Activated CD4-positive, alpha-beta memory T cell treated with anti-CD3 and anti-CD28 coated beads, Interleukin-2, amount 10 ng/mL, durations not matched to agents 7 days and 5 days (primary cell): ENCODE measurements at regions of chr17 and their contacts with region 1.

Region 1: GRCh38 chr17:43673516-43674323 is 12.0 kb upstream of the MEOX1 start:
- DNase-seq: peak; percentile 79
- H3K4me3 Mint-ChIP-seq: no peak overlapping the region
- H3K27ac Mint-ChIP-seq: no peak overlapping the region
- H3K4me1 Mint-ChIP-seq: peaks cover 34% of the 10 kb centered on the region
- H3K27me3 Mint-ChIP-seq: peaks cover 2% of the 10 kb centered on the region

Region 2: GRCh38 chr17:43641416-43641815 is 32.3 kb before region 1 on chr17:
- CTCF ChIA-PET with region 1: interaction called, 11 read pairs
- POLR2A ChIA-PET with region 1: no interaction called
- DNase-seq: no peak
- H3K4me3 Mint-ChIP-seq: no peak overlapping the region
- H3K27ac Mint-ChIP-seq: no peak overlapping the region
- H3K4me1 Mint-ChIP-seq: peaks cover 10% of the 10 kb centered on the region
- H3K27me3 Mint-ChIP-seq: peaks cover 21% of the 10 kb centered on the region

Region 3: DNA sequence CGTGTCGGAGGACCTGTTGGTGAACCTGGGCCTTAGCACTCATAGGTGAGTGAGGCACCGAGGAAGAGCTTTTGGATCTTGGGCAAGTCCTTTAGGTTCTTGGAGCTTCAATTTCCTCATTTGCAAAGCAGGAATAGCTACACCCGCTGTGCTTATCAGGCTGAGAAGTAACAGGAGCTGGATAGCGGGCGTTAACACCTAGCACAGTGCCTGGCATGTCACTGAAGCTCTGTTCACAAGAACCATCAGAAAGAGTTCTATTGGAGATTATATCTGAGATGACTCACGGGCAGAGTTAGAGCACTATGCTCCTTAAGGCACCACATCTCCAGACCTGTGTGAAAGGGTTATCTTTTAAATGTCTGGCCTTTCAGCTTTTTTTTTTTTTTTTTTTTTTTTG is 24.8 kb before region 1 on chr17:
- CTCF ChIA-PET with region 1: interaction called, 21 read pairs
- POLR2A ChIA-PET with region 1: no interaction called
- DNase-seq: no peak
- H3K4me3 Mint-ChIP-seq: no peak overlapping the region
- H3K27ac Mint-ChIP-seq: no peak overlapping the region
- H3K4me1 Mint-ChIP-seq: peaks cover 13% of the 10 kb centered on the region
- H3K27me3 Mint-ChIP-seq: peaks cover 17% of the 10 kb centered on the region

Region 4: GRCh38 chr17:43860077-43860725 is 186.5 kb after region 1 on chr17:
- CTCF ChIA-PET with region 1: no interaction called
- POLR2A ChIA-PET with region 1: no interaction called
- DNase-seq: no peak
- H3K4me3 Mint-ChIP-seq: no peak overlapping the region
- H3K27ac Mint-ChIP-seq: no peak overlapping the region
- H3K4me1 Mint-ChIP-seq: no peaks in the 10 kb centered on the region
- H3K27me3 Mint-ChIP-seq: peaks cover 8% of the 10 kb centered on the region